ENCODE measurements at regions of chr15 and their contacts with region 1.

Region 1: DNA sequence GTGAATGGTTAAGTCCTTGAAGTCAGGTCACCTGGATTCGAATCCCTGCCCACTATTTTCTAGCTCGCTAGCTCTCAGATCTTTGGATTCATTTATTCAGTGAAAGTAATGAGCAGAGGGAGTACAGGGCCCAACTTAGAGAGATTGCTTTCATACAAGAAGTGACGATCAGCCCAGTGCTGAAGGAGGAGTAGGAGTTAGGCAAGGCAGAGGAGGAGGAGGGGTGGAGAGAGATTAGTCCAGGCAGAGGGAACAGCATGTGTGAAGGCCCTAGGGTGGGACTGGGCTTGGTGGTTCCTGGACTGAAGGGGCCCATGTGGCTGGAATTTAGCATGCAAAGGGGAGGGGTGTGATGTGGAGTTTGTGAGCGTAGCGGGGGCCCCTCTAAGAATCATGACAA is 3.8 kb upstream of the CHRNA5 start:
- H3K4me3 Mint-ChIP-seq: no peak overlapping the region
- H3K27ac Mint-ChIP-seq: no peak overlapping the region
- H3K4me1 Mint-ChIP-seq: peaks cover 18% of the 10 kb centered on the region
- H3K27me3 Mint-ChIP-seq: peaks cover 40% of the 10 kb centered on the region

Region 2: DNA sequence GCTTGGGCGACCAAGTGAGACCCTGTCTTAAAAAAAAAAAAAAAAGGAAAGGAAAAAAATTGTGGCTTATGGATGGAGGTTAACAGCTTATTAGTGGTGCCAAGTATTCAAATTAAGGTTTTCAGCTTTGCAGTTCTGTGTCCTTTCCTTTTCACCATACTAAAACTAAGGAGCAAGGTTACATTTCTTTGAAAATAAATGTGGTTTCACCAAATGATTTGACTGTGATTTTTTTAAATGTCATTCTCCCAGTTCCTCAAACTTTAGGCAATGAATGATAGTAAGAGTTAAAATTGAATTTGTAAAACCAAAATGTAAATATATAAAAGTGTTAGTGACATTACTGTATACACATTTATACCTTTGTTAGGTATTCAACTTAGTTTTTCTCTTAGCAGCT is 13.5 kb after region 1 on chr15:
- intact Hi-C with region 1: loop called (anchors 1 kb)
- H3K4me3 Mint-ChIP-seq: no peak overlapping the region
- H3K27ac Mint-ChIP-seq: no peak overlapping the region
- H3K4me1 Mint-ChIP-seq: no peaks in the 10 kb centered on the region
- H3K27me3 Mint-ChIP-seq: peaks cover 3% of the 10 kb centered on the region

Region 3: DNA sequence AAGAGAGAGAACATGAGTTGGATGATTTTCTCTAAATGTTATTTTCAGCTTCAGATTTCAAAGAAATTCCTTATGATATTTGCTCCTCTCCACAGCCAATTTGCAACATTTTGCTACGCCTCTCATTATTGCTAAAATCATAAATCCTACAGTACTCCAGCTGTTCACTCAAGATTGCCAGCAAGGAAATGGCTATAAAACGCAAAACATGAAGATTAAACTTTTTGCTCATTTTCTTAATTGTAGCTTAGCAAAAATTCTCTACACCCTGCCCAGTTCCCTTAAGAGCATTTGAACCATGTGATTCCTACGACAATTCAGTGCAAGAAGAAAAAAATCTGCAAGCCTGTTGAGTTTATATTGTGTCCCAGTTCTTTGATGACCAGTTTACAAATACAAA is 52.5 kb after region 1 on chr15:
- intact Hi-C with region 1: no loop called
- H3K4me3 Mint-ChIP-seq: no peak overlapping the region
- H3K27ac Mint-ChIP-seq: no peak overlapping the region
- H3K4me1 Mint-ChIP-seq: peaks cover 8% of the 10 kb centered on the region
- H3K27me3 Mint-ChIP-seq: peaks cover 13% of the 10 kb centered on the region

Measured in dendritic cell treated with granulocyte-macrophage colony-stimulating factor and Interleukin-4, amounts not matched to agents 40 ng/mL and 50 ng/mL, for 4 days (primary cell).